Endothelial cell of umbilical vein (primary cell): ENCODE measurements at regions of chr3 and their contacts with region 1.

Region 1: GRCh38 chr3:152961323-152961722 is 126.4 kb downstream of the P2RY1 start:
- DNase-seq: peak; percentile 52
- H3K4me3 ChIP-seq: no peak overlapping the region
- H3K27ac ChIP-seq: no peak overlapping the region
- H3K4me1 ChIP-seq: peaks cover 9% of the 10 kb centered on the region
- H3K27me3 ChIP-seq: no peaks in the 10 kb centered on the region
- CTCF ChIP-seq: peak; percentile 10 to 48
- POLR2A ChIP-seq: no peak

Region 2: GRCh38 chr3:152477422-152477821 is 483.9 kb before region 1 on chr3:
- CTCF ChIA-PET with region 1: interaction called, 11 read pairs
- POLR2A ChIA-PET with region 1: no interaction called
- dilution Hi-C with region 1: no loop called
- intact Hi-C with region 1: loop called (anchors 1 kb)
- DNase-seq: no peak
- H3K4me3 ChIP-seq: no peak overlapping the region
- H3K27ac ChIP-seq: no peak overlapping the region
- H3K4me1 ChIP-seq: no peaks in the 10 kb centered on the region
- H3K27me3 ChIP-seq: no peaks in the 10 kb centered on the region
- CTCF ChIP-seq: no peak
- POLR2A ChIP-seq: no peak

Region 3: GRCh38 chr3:152834776-152835600 is 126.3 kb before region 1 on chr3 and contains the start of gene P2RY1:
- CTCF ChIA-PET with region 1: interaction called, 5 read pairs
- POLR2A ChIA-PET with region 1: no interaction called
- dilution Hi-C with region 1: no loop called
- intact Hi-C with region 1: loop called (anchors 5 kb)
- DNase-seq: peak; percentile 59
- H3K4me3 ChIP-seq: peak within 1 kb of the TSS; percentile 51 to 77 (median 66)
- H3K27ac ChIP-seq: no peak within 1 kb of the TSS
- H3K4me1 ChIP-seq: peaks cover 6% of the 10 kb centered on the region
- H3K27me3 ChIP-seq: peaks cover 0 to 3% of the 10 kb centered on the region in 2 experiments
- CTCF ChIP-seq: peak; percentile 41 to 54
- POLR2A ChIP-seq: no peak
- total RNA-seq, gene P2RY1: 1.7 and 1.9 TPM in 2 replicates

Region 4: DNA sequence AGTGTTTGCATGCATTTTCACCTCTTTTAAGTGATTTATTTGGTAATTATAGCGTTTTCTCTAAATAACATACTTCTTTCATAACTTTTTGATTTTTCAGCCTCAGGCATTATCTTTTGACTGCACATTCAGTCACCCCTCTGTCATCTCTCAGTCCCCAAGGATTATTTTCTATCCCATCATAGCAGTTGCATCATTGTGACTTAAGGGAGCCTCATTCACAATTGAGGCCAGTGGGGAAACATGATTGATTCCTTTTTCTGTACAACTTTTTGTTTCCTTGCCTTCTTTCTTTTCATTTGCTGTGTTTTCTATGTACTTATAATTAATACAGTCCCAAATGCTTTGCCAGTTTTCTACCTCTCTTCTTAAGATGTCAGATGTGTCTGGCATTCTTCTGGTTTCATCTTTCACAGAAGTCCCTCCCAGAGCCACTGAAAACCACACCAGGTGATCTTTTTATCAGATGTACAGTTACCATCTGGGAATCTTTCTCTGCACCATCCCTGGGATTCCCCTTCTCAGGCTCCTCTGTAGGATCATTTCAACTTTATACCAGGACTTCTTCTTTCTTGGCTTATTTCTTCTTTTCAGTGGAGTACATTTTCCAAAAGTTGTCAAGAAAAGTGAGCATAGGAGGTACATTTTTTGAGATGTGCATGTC is 352.1 kb after region 1 on chr3:
- CTCF ChIA-PET with region 1: no interaction called
- POLR2A ChIA-PET with region 1: no interaction called
- dilution Hi-C with region 1: no loop called
- intact Hi-C with region 1: no loop called
- DNase-seq: no peak
- H3K4me3 ChIP-seq: no peak overlapping the region
- H3K27ac ChIP-seq: no peak overlapping the region
- H3K4me1 ChIP-seq: no peaks in the 10 kb centered on the region
- H3K27me3 ChIP-seq: no peaks in the 10 kb centered on the region
- CTCF ChIP-seq: no peak
- POLR2A ChIP-seq: no peak

Region 5: DNA sequence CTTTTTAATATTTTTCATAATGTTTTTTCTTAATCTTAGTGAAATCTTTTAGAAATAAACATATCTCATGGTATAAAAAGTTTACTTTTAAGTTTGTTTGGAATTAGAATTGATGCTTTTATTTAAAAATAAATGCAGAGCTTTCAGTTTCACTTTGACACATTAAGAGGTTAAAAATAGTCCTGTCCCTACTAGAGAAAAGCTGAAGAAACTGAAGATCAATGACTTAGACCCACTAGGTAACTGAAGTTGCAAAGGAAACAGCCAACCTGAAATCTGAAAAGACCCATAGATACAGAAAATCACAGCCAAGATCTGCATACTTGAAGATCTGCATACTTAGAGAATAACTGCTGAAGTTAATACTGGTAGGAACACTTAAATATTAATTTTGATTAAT is 438.3 kb after region 1 on chr3:
- CTCF ChIA-PET with region 1: no interaction called
- POLR2A ChIA-PET with region 1: no interaction called
- dilution Hi-C with region 1: no loop called
- intact Hi-C with region 1: no loop called
- DNase-seq: no peak
- H3K4me3 ChIP-seq: no peak overlapping the region
- H3K27ac ChIP-seq: no peak overlapping the region
- H3K4me1 ChIP-seq: no peaks in the 10 kb centered on the region
- H3K27me3 ChIP-seq: no peaks in the 10 kb centered on the region
- CTCF ChIP-seq: no peak
- POLR2A ChIP-seq: no peak